ENCODE measurements at regions of chr10 and their contacts with region 1.

Region 1: GRCh38 chr10:61140765-61141392 is 196.9 kb upstream of the RHOBTB1 start:
- DNase-seq: peak; percentile 51
- H3K4me3 ChIP-seq: no peak overlapping the region
- H3K27ac ChIP-seq: no peak overlapping the region
- H3K27me3 ChIP-seq: no peaks in the 10 kb centered on the region
- CTCF ChIP-seq: peak; percentile 74

Region 2: GRCh38 chr10:60769406-60769805 is 371.5 kb before region 1 on chr10:
- CTCF ChIA-PET with region 1: no interaction called
- POLR2A ChIA-PET with region 1: no interaction called
- DNase-seq: no peak
- H3K4me3 ChIP-seq: no peak overlapping the region
- H3K27ac ChIP-seq: no peak overlapping the region
- H3K27me3 ChIP-seq: peaks cover 2% of the 10 kb centered on the region
- CTCF ChIP-seq: no peak

Region 3: DNA sequence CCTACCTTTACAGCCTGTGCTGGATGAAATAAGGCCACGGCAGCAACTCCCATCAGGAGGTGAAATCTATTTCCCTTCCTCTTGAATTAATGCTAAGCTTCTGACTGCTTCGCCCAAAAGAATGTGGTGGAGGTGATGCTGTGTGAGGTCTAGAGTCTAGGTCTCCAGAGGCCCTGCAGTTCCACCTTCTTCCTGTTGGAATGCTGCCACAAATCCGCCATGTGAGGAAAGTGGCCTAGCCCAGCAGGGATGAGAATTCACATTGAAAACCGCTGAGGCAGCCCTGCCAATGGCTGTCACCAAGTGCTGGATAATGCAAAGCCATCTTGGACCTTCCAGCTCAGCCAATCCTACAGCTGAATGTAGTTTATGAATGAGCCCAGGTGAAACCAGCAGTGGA is 224.9 kb before region 1 on chr10:
- CTCF ChIA-PET with region 1: interaction called, 12 read pairs
- POLR2A ChIA-PET with region 1: no interaction called
- DNase-seq: no peak
- H3K4me3 ChIP-seq: no peak overlapping the region
- H3K27ac ChIP-seq: no peak overlapping the region
- H3K27me3 ChIP-seq: no peaks in the 10 kb centered on the region
- CTCF ChIP-seq: no peak

Region 4: GRCh38 chr10:61063034-61063433 is 77.8 kb before region 1 on chr10:
- CTCF ChIA-PET with region 1: no interaction called
- POLR2A ChIA-PET with region 1: no interaction called
- DNase-seq: no peak
- H3K4me3 ChIP-seq: no peak overlapping the region
- H3K27ac ChIP-seq: no peak overlapping the region
- H3K27me3 ChIP-seq: no peaks in the 10 kb centered on the region
- CTCF ChIP-seq: no peak

Region 5: DNA sequence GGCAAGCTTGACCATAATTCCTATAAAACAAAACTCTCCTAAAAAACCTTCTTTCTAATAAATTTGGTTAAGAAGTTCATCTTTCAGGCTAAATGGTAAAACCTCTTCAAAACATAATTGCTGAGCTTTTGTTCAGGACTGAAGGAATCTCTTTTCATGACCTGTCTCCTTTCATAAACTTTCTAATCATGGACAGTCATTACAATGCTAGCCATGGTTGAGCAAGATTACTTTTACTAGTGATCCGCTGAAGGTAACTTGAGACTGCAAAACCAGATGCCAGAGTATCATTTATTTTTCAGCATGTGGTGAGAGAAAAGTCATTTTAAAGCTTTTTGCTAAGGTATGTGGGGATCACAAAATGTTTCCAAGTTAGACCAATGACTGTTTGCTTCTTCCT is 10.5 kb before region 1 on chr10:
- CTCF ChIA-PET with region 1: interaction called, 18 read pairs
- POLR2A ChIA-PET with region 1: no interaction called
- DNase-seq: no peak
- H3K4me3 ChIP-seq: no peak overlapping the region
- H3K27ac ChIP-seq: no peak overlapping the region
- H3K27me3 ChIP-seq: no peaks in the 10 kb centered on the region
- CTCF ChIP-seq: no peak

Region 6: DNA sequence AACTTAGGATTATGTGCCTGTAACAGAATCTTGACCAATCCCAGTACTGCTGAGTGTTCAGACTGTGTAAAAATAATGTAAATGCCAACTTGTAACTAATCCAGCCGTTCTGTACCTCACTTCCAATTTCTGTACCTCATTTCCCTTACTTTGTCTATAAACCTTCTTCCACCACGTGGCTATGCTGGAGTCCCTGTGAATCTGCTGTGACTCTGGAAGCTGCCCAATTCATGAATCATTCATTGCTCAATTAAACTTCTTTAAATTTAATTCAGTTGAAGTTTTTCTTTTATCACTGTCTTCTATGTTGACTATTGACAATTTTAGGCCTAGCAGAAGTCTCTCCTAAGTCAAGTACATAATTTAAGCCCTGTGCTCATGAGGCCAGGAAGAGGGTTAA is 18.4 kb after region 1 on chr10:
- CTCF ChIA-PET with region 1: interaction called, 29 read pairs
- POLR2A ChIA-PET with region 1: no interaction called
- DNase-seq: no peak
- H3K4me3 ChIP-seq: no peak overlapping the region
- H3K27ac ChIP-seq: no peak overlapping the region
- H3K27me3 ChIP-seq: no peaks in the 10 kb centered on the region
- CTCF ChIP-seq: no peak

Region 7: DNA sequence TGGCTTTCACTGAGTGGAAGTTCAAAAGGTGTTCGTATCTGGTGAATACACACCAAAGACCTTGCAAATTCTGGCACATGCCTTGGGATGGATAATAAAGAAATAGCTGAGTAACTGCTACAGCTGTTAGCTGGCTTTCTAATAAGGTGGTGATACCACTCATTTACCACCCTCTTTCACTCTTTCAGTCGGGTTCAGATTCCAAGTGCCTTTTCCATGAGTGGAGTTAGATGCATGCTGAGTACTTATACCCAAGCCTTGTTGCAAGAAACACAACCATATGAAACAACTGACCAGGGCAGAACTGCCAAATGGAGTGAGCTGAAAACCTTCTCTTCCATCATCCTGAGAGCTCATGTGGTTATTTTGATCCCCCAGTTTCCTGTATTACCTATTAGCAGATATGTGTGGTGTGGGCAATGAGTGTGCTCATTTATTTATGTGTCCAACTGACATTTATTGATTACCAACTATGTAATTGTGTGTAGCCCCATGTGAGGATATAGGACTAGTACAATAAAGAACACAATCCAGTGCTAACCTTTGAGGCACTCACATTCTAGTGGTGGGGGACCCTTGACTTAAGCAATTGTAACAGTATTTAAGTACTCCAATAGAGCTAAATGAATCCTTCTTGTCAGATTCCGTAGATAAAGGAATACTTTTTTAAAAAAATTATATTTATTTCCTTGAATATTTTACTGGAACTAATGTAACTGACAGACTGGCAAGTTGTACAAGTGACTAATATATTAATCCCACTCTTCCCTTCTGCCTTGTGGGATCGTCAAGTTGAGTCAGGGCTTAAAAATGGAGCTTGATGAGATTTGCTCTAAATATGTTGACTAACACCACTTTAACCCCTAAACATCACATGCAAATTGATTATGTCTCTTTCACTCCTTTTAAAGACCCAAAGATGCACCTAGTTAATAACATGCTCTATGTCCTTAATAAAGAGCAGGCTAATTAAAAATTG is 885.3 kb after region 1 on chr10:
- CTCF ChIA-PET with region 1: no interaction called
- POLR2A ChIA-PET with region 1: interaction called, 10 read pairs
- DNase-seq: no peak
- H3K4me3 ChIP-seq: no peak overlapping the region
- H3K27ac ChIP-seq: no peak overlapping the region
- H3K27me3 ChIP-seq: no peaks in the 10 kb centered on the region
- CTCF ChIP-seq: no peak